CD4-positive, alpha-beta T cell (primary cell): ENCODE measurements at regions of chr11 and their contacts with region 1.

Region 1: DNA sequence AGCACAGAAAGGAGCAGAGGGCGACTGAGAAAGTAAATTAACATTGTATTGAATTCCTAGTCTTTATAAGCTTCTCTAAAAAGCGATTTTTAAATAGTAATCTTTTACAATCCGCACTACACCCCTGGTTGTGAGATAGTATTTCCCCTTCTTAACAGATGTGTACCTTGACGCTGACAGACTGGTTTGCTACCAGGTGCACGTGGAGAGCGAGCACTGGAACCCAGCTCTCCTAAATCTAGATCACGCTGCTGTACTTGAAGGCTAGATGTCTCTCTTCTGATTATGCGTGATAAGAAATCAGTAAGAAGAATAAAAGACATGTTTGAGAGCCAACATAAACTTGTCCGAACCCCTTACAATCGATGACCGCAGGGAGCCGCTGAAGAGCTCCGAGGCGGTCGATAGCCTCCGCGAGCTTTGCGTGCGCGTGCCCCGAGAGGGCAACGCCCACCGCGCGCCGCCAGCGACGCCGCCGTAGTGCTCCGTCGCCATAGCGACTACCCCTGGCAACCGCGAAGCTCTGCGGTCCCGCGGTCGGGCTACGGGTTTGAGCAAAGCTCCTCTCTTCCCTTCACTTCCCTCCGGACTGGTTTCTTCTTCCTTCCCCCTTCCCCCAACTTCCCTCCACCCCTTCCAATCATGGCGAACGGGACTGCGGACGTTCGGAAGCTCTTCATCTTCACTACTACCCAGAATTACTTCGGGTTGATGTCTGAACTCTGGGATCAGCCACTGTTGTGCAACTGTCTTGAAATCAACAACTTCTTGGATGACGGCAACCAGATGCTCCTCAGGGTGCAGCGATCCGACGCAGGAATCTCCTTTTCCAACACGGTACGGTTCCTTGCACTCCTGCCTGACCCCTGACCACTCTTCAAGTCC is at the start of gene DYNC2H1:
- DNase-seq: peak; percentile 74 to 95 (median 83)
- ATAC-seq: peak; percentile 91
- H3K4me3 ChIP-seq: peak within 1 kb of the TSS; percentile 67
- H3K4me3 Mint-ChIP-seq: peak within 1 kb of the TSS; percentile 93
- H3K27ac ChIP-seq: peak within 1 kb of the TSS; percentile 36 to 47
- H3K27ac Mint-ChIP-seq: peak within 1 kb of the TSS; percentile 78
- H3K4me1 ChIP-seq: peaks cover 12% of the 10 kb centered on the region
- H3K4me1 Mint-ChIP-seq: peaks cover 10% of the 10 kb centered on the region
- H3K27me3 ChIP-seq: no peaks in the 10 kb centered on the region
- H3K27me3 Mint-ChIP-seq: peaks cover 7% of the 10 kb centered on the region
- CTCF ChIP-seq: peak; percentile 57
- total RNA-seq, gene DYNC2H1: 2.8 to 3.2 TPM

Region 2: GRCh38 chr11:101914738-101915426 is 1194.3 kb before region 1 on chr11 and contains the start of gene CEP126:
- CTCF ChIA-PET with region 1: no interaction called
- POLR2A ChIA-PET with region 1: interaction called, 3 read pairs
- intact Hi-C with region 1: loop called in 1 of 2 experiments (anchors 5 kb)
- DNase-seq: peak; percentile 81 to 96 (median 92)
- ATAC-seq: peak; percentile 88
- H3K4me3 ChIP-seq: peak within 1 kb of the TSS; percentile 75
- H3K4me3 Mint-ChIP-seq: peak within 1 kb of the TSS; percentile 96
- H3K27ac ChIP-seq: peak within 1 kb of the TSS; percentile 64 to 69
- H3K27ac Mint-ChIP-seq: peak within 1 kb of the TSS; percentile 87
- H3K4me1 ChIP-seq: peaks cover 10% of the 10 kb centered on the region
- H3K4me1 Mint-ChIP-seq: peaks cover 25% of the 10 kb centered on the region
- H3K27me3 ChIP-seq: no peaks in the 10 kb centered on the region
- H3K27me3 Mint-ChIP-seq: peaks cover 4% of the 10 kb centered on the region
- CTCF ChIP-seq: peak; percentile 9
- total RNA-seq, gene CEP126: 0.96 to 1.2 TPM

Region 3: DNA sequence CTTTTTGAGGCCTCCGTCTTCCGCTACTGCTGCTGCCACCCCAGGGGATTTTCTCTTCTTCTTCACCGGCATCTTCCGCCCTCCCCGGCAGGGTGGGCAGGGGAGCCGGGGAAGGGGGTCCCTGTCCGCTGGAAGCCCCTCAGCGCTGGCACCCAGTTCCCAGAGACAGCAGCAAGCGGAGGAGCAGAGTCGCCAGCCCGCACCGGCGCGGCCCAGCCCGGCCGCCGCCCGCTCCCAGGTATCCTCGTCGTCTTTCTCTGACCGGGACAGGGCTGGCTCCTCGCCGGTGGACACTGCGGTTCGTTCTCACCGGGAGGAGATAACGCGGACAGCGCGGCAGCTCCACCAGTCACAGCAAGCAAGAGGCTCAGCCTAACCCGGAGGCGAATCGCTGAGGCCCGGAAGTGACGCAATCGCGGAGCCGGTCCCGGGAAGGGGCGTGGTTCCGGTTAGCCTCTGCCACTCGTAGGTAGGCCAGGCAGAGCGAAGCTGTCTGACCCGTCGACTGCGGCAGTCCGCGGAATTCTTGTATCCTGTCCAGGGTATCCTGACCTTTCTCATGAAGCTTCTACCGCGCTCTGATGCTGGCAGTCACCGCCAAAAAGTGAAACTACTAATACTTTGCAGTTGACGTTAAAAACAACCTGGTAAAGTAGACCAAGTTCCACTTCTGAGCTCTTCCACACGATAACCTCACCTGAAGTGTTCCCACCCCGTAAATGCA is 17.2 kb before region 1 on chr11 and contains the start of gene DCUN1D5:
- CTCF ChIA-PET with region 1: interaction called, 25 read pairs
- POLR2A ChIA-PET with region 1: interaction called, 90 read pairs
- intact Hi-C with region 1: loop called (anchors 1 kb)
- DNase-seq: peak; percentile 90 to 97 (median 94)
- ATAC-seq: peak; percentile 95
- H3K4me3 ChIP-seq: peak within 1 kb of the TSS; percentile 83
- H3K4me3 Mint-ChIP-seq: peak within 1 kb of the TSS; percentile 96
- H3K27ac ChIP-seq: peak within 1 kb of the TSS; percentile 81 to 82
- H3K27ac Mint-ChIP-seq: peak within 1 kb of the TSS; percentile 98
- H3K4me1 ChIP-seq: peaks cover 22% of the 10 kb centered on the region
- H3K4me1 Mint-ChIP-seq: peaks cover 40% of the 10 kb centered on the region
- H3K27me3 ChIP-seq: peaks cover 3 to 27% of the 10 kb centered on the region in 2 experiments
- H3K27me3 Mint-ChIP-seq: peaks cover 43% of the 10 kb centered on the region
- CTCF ChIP-seq: no peak
- total RNA-seq, gene DCUN1D5: 15.6 to 16.1 TPM

Region 4: GRCh38 chr11:104073950-104074705 is 965.0 kb after region 1 on chr11:
- CTCF ChIA-PET with region 1: no interaction called
- POLR2A ChIA-PET with region 1: no interaction called
- intact Hi-C with region 1: no loop called
- DNase-seq: peak in 3 of 14 experiments; percentile 9 to 46 (median 31)
- ATAC-seq: no peak
- H3K4me3 ChIP-seq: no peak overlapping the region
- H3K4me3 Mint-ChIP-seq: no peak overlapping the region
- H3K27ac ChIP-seq: no peak overlapping the region
- H3K27ac Mint-ChIP-seq: no peak overlapping the region
- H3K4me1 ChIP-seq: no peaks in the 10 kb centered on the region
- H3K4me1 Mint-ChIP-seq: no peaks in the 10 kb centered on the region
- H3K27me3 ChIP-seq: no peaks in the 10 kb centered on the region
- H3K27me3 Mint-ChIP-seq: no peaks in the 10 kb centered on the region
- CTCF ChIP-seq: no peak